ENCODE measurements at regions of chr2 and their contacts with region 1.

Region 1: DNA sequence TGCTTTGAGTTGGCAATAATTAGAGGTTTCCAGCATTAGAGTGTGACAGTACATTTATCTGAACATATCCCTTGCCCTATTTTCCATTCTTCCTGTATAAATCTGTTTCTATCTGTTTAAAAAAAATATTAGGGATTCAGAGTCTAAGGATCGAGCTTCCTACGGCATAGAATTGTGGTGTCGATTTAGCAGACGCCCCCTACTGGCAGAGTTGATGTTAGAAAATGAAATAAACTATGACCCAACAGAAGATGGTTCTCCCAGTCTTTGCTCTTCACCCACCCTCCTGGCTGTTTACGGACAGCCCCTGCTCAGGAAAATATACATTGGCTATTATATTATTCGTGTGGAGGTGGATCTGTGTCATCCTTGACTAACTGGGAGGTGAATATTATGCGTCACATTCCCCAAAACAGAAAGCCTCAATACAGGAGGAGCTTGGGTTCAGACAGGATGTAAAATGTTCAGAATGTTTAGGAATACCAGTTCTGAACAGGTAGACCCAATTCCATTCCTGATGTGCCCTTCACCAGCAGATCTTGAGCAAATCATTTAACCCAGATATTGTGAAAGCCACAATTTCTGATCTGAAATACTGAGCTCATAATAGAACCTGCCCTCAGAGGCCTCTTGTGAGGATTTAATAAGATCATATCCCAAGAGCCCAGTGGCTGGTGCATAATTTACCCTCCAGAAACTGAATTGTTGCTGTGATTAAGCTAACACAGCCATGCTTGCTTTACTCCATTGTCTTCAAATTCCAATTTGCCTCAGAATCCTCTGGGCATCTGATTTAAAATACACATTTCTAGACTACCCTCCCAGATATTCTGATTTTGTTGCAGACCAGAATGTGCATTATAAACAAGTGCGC is 10.8 kb upstream of the ERMN start:
- DNase-seq: peak in 1 of 2 donors; percentile 23
- H3K4me3 ChIP-seq: no peak overlapping the region
- H3K27ac ChIP-seq: no peak overlapping the region
- H3K4me1 ChIP-seq: peaks cover 0 to 8% (median 0%) of the 10 kb centered on the region in 4 donors
- H3K27me3 ChIP-seq: no peaks in the 10 kb centered on the region
- CTCF ChIP-seq: peak; percentile 40 to 52

Region 2: GRCh38 chr2:157160131-157160530 is 176.2 kb before region 1 on chr2:
- intact Hi-C with region 1: no loop called
- DNase-seq: no peak
- H3K4me3 ChIP-seq: no peak overlapping the region
- H3K27ac ChIP-seq: no peak overlapping the region
- H3K4me1 ChIP-seq: no peaks in the 10 kb centered on the region
- H3K27me3 ChIP-seq: no peaks in the 10 kb centered on the region
- CTCF ChIP-seq: no peak

Region 3: DNA sequence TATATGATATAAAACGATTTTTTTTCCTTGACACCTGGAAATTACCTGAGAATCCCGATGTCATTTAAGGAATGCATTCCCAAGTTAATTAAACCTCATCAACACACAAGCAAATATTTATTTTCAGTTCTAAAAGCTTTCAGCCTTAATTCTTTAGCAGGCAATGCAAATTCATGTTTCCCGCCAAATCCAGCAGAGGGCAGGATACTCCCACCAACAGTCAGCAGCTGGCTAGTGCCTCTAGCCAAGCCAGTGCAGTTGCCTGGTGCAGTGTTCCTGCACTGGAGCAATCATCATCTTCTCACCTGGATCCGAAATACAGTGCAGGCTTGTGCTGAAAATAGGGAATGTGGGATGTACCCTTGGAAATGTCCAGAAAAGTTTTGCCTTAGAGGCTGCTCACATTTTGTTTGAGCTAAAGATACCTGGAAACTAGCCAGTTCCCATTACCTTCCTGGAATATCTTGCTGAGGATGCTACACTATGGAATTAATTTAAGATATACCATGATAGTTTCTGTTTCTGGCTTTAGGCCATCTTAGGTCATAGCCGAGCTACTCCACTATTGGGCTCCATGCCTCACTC is 155.9 kb after region 1 on chr2:
- intact Hi-C with region 1: loop called (anchors 10 kb)
- DNase-seq: peak; percentile 51 to 70
- H3K4me3 ChIP-seq: no peak overlapping the region
- H3K27ac ChIP-seq: no peak overlapping the region
- H3K4me1 ChIP-seq: peaks cover 0 to 25% (median 10%) of the 10 kb centered on the region in 4 donors
- H3K27me3 ChIP-seq: no peaks in the 10 kb centered on the region
- CTCF ChIP-seq: peak; percentile 58 to 61